Left ventricle myocardium inferior (tissue), 1 donor: ENCODE measurements at regions of chr1 and their contacts with region 1.

Region 1: DNA sequence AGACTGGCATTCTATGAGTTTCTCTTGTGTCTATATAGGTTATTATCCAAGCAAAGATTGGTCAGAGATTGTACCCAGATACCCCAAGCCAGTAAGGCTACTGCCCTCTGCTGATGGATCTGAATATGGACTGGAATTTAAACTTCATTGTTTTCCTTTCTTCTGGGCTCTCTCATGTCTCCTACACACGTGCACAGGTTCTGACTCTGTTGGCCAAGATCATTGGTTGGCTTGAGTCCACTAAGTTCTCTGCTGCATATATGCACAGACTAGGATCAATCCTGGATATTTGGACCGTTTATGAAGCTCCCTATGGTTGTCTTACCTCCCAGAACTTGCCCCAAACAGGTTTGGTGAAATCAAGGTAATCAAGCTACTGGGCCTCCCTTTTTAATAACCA is 69.7 kb downstream of the CC2D1B start:
- DNase-seq: no peak
- H3K4me3 ChIP-seq: no peak overlapping the region
- H3K27ac ChIP-seq: no peak overlapping the region
- H3K4me1 ChIP-seq: no peaks in the 10 kb centered on the region
- H3K27me3 ChIP-seq: no peaks in the 10 kb centered on the region
- CTCF ChIP-seq: peak; percentile 73

Region 2: DNA sequence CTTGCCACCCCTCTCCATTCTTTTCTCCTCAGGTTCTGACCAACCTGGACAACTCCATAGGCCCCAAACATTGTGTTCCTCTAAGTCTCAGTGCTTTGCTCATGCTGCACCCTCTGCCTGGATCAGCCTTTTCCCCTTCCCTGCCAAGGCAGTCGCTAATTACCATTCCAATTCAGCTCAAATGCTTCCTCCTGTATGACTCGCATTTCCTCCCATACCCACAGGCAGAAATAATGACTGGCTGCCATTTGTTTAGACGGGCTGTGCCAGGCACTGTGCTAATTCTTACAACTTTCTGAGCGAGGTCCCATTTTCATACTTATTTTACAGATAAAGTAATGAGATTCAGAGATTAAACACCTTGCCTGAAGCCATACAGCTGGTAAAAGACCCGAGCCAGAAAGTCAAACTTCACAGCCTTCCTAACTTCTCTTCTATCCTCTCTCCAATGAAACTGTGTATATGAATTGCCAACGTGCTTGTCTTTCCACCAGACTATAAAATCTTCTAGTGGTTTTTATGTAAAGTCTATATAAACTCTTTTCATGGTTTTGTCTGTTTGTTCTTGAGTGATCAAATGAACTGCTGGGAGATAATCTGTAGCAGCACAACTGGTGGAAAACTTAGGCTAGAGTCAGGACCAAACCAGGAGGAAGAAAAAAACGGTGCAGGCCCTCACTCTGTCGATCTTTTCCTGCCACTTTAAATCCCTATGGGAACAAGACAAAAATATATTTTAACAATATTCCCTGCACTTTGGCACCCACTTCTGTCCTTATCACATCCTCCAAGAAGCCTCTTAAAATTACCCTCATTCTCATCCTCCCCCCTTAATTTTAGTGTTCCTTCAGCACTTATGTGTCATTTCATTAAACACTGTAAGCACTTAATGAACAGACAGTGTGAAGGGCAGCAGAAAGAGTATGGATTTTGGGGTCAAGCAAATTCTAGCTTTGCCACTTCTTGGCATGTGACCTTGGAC is 339.5 kb before region 1 on chr1:
- intact Hi-C with region 1: no loop called
- DNase-seq: no peak
- H3K4me3 ChIP-seq: no peak overlapping the region
- H3K27ac ChIP-seq: no peak overlapping the region
- H3K4me1 ChIP-seq: peaks cover 3% of the 10 kb centered on the region
- H3K27me3 ChIP-seq: peaks cover 38% of the 10 kb centered on the region
- CTCF ChIP-seq: no peak

Region 3: DNA sequence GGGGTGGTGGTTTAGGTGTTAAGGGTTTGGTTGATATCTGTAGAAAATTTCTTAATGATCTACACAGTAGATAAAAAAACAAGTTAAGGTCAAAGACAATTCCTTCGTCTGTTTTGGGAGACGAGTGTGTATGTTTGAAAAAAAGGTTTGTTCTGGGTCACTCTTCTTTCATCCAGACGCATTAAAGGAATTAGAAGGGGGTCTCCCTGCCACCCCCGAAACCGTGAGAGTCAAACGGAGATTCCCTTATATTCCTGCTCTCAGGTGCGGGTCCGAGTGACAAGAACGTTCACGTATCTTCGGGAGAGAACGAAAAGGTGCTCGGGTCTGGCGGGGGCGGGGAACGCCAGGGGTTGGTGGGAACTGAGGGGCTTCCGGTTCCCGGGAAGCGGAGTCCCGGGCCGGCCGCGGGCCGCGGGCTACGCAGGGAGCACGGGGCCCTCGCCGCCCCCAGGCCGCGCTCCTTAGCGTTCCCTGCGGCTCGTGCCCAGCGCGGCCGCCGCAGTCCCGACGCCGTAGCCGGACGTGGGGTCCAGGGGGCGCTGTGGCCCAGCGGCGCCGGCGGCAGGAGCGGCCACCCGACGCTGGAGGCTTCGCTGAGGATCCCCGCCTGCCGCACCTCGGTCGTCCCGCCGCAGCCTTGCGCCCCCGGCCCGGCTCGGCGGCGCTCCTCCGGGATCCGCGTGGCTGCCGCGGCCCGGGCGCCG is 154.7 kb before region 1 on chr1 and contains the start of gene ZFYVE9:
- intact Hi-C with region 1: loop called (anchors 5 kb)
- DNase-seq: peak; percentile 76
- H3K4me3 ChIP-seq: peak within 1 kb of the TSS; percentile 95
- H3K27ac ChIP-seq: peak within 1 kb of the TSS; percentile 97
- H3K4me1 ChIP-seq: peaks cover 48% of the 10 kb centered on the region
- H3K27me3 ChIP-seq: no peaks in the 10 kb centered on the region
- CTCF ChIP-seq: peak; percentile 86
- total RNA-seq, gene ZFYVE9: 17.9 TPM

Region 4: DNA sequence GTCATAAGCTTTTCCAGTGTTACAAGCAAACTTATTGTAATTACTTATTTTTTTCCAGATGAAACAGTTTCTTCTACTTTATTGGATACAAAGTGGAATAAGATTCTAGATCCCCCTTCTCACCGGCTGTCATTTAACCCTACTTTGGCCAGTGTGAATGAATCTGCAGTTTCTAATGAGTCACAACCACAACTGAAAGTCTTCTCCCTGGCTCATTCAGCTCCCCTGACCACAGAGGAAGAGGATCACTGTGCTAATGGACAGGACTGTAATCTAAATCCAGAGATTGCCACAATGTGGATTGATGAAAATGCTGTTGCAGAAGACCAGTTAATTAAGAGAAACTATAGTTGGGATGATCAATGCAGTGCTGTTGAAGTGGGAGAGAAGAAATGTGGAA is 58.9 kb before region 1 on chr1:
- intact Hi-C with region 1: no loop called
- DNase-seq: no peak
- H3K4me3 ChIP-seq: no peak overlapping the region
- H3K27ac ChIP-seq: no peak overlapping the region
- H3K4me1 ChIP-seq: no peaks in the 10 kb centered on the region
- H3K27me3 ChIP-seq: no peaks in the 10 kb centered on the region
- CTCF ChIP-seq: no peak